ENCODE measurements at regions of chr7 and their contacts with region 1.

Region 1: DNA sequence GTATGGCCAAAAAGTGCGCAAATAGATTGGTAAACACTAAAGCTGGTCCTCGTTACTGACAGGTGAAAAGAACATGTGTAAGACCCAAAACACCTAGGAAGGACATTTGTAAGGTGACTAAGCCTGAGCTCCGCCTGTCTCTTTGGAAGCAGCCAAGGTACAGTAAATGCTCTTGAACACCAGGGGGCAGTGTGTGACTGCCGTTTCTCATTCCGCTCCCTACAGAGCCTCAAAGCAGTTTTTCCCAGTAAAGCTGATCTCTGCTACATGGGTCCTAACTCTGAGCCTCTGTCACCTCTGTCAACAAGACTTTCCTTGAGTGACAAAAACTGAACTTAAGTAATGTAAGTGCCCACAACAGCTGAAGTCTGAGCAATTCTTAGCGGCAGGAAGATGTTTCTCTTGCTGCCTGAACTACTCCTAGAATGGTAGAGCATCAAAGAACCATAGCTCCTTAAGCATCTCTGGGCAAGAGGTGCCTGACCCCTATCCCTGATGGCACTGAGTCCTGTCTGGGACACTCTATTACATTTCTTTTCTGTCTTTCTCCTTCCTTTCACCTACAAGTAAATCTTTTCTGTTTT is 238.0 kb upstream of the INHBA start:
- DNase-seq: peak; percentile 72 to 77
- H3K4me3 ChIP-seq: no peak overlapping the region
- H3K27ac ChIP-seq: no peak overlapping the region
- H3K4me1 ChIP-seq: peaks cover 8 to 13% of the 10 kb centered on the region in 2 donors
- H3K27me3 ChIP-seq: no peaks in the 10 kb centered on the region
- CTCF ChIP-seq: peak; percentile 69 to 91 (median 90)
- POLR2A ChIP-seq: no peak

Region 2: DNA sequence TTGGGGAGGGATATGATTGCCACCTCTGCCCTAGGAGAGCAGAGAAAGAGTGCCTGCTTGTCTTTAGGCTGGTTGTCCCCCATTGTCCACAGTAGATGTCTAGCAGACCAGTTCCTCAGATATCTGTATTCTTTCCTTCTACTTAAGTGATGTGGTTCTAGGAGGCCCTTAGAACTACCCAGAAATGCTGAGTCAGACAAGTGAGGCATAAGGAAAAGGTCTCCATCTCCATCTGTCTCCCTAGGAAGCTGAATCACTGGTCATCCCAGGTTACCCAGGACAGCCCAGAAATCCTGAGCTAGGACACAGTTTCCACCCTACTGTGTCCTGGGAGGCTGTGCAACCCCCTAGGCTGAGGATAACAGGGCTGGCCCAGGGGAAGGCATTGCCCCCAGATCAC is 144.5 kb before region 1 on chr7:
- intact Hi-C with region 1: no loop called
- DNase-seq: no peak
- H3K4me3 ChIP-seq: no peak overlapping the region
- H3K27ac ChIP-seq: no peak overlapping the region
- H3K4me1 ChIP-seq: no peaks in the 10 kb centered on the region
- H3K27me3 ChIP-seq: no peaks in the 10 kb centered on the region
- CTCF ChIP-seq: no peak
- POLR2A ChIP-seq: no peak

Region 3: DNA sequence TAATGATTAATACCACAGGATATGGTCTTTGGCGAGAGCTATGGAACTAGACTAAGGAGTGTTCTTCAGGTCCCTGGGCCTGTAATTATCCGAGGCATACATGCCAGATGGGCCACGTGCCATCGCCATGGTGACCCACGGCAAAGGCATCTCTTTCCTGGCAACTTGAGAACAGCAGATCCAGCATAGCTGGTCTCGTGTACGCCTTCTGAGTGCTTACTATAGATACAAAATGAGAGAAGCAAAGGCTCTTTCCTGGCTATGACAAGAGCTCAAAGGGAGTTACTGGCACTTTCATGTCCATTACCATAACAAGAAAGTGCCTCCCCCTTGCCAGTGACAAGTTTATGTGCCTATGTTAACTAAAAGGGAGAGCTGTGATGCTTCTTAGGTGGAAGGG is 322.1 kb after region 1 on chr7:
- intact Hi-C with region 1: no loop called
- DNase-seq: peak in 1 of 2 donors; percentile 16
- H3K4me3 ChIP-seq: no peak overlapping the region
- H3K27ac ChIP-seq: no peak overlapping the region
- H3K4me1 ChIP-seq: no peaks in the 10 kb centered on the region
- H3K27me3 ChIP-seq: no peaks in the 10 kb centered on the region
- CTCF ChIP-seq: no peak
- POLR2A ChIP-seq: no peak

Region 4: DNA sequence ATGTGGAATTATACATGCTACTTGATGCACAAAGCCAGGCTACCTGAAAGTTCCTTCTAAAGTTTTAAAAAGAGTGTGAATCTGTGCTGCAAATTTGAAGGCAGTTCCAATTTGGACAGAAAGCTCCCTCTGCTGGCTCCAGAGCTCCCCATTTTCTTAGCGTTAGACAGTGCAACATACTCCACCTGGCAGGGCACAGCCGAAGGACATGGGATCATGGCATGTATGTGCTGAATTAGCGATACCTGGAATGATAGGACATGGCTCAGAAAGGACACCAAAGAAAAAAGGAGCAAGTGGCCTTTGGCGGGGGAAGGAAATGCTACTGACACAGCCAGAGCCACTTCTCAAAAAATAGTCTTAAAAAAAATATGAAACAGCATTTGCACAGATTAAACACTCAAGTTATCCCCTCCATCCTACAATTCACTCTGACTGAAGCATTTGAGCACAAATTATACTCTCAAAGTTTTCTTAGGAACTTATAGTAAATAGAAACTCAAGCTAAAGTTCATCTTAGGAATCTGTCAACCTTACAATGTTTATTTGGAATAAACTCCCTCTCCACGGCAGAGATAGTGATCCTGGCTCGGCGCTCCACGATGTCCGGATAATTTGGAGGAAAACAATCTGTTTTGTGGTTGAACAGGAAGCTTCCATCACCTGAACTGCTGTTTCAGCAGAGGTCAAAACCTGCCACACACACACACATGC is 891.0 kb after region 1 on chr7:
- intact Hi-C with region 1: loop called (anchors 5 kb)
- DNase-seq: peak; percentile 56 to 63
- H3K4me3 ChIP-seq: no peak overlapping the region
- H3K27ac ChIP-seq: peak overlapping the region in 1 of 3 donors; percentile 41
- H3K4me1 ChIP-seq: peaks cover 20 to 24% of the 10 kb centered on the region in 2 donors
- H3K27me3 ChIP-seq: no peaks in the 10 kb centered on the region
- CTCF ChIP-seq: peak in 4 of 6 experiments; percentile 29 to 67 (median 61)
- POLR2A ChIP-seq: no peak